ENCODE measurements at regions of chr1 and their contacts with region 1.

Region 1: GRCh38 chr1:52002038-52002917 is 11.8 kb upstream of the RAB3B start:
- DNase-seq: peak; percentile 86
- ATAC-seq: peak; percentile 99
- H3K4me3 ChIP-seq: no peak overlapping the region
- H3K27ac ChIP-seq: no peak overlapping the region
- H3K4me1 ChIP-seq: no peaks in the 10 kb centered on the region; a peak in 1 of 4 replicates
- H3K27me3 ChIP-seq: no peaks in the 10 kb centered on the region
- CTCF ChIP-seq: peak; percentile 87 to 97 (median 87)
- POLR2A ChIP-seq: no peak
- RAD21 ChIP-seq: peak; percentile 97

Region 2: GRCh38 chr1:51627678-51628077 is 374.6 kb before region 1 on chr1:
- CTCF ChIA-PET with region 1: no interaction called
- POLR2A ChIA-PET with region 1: no interaction called
- RAD21 ChIA-PET with region 1: no interaction called
- intact Hi-C with region 1: loop called (anchors 10 kb)
- DNase-seq: no peak
- ATAC-seq: peak; percentile 72
- H3K4me3 ChIP-seq: no peak overlapping the region
- H3K27ac ChIP-seq: no peak overlapping the region
- H3K4me1 ChIP-seq: peaks cover 7 to 15% of the 10 kb centered on the region in 2 experiments
- H3K27me3 ChIP-seq: no peaks in the 10 kb centered on the region
- CTCF ChIP-seq: peak; percentile 41 to 59 (median 52); a peak in 5 of 6 replicates
- POLR2A ChIP-seq: no peak
- RAD21 ChIP-seq: peak; percentile 71

Region 3: DNA sequence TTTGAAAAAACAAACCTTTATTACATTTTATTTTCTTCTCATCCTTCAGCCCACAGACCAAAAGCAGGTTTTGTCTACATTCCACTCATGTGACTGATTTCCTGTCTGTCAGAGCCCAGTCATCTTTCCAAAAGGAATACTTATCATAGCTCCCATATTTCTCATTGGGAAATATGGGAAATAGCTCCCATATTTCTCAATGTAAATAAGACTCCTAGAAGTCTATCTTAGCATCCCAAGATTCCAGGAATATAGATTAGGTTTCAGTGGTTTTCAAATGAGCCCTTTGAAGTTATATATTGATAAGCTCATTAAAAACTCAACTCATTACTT is 104.6 kb before region 1 on chr1:
- CTCF ChIA-PET with region 1: interaction called, 16 read pairs
- POLR2A ChIA-PET with region 1: no interaction called
- RAD21 ChIA-PET with region 1: interaction called, 3 read pairs
- intact Hi-C with region 1: loop called (anchors 1 kb)
- DNase-seq: peak; percentile 47
- ATAC-seq: peak; percentile 64
- H3K4me3 ChIP-seq: peak overlapping the region in 1 of 2 experiments; percentile 25; a peak in 2 of 4 replicates
- H3K27ac ChIP-seq: peak overlapping the region; percentile 24; the same call in 1 of the 2 replicates
- H3K4me1 ChIP-seq: peaks cover 14 to 37% of the 10 kb centered on the region in 2 experiments
- H3K27me3 ChIP-seq: no peaks in the 10 kb centered on the region
- CTCF ChIP-seq: no peak
- POLR2A ChIP-seq: no peak
- RAD21 ChIP-seq: no peak

Measured in HCT116 (cell line).